SK-N-SH (cell line): ENCODE measurements at regions of chr15 and their contacts with region 1.

Region 1: DNA sequence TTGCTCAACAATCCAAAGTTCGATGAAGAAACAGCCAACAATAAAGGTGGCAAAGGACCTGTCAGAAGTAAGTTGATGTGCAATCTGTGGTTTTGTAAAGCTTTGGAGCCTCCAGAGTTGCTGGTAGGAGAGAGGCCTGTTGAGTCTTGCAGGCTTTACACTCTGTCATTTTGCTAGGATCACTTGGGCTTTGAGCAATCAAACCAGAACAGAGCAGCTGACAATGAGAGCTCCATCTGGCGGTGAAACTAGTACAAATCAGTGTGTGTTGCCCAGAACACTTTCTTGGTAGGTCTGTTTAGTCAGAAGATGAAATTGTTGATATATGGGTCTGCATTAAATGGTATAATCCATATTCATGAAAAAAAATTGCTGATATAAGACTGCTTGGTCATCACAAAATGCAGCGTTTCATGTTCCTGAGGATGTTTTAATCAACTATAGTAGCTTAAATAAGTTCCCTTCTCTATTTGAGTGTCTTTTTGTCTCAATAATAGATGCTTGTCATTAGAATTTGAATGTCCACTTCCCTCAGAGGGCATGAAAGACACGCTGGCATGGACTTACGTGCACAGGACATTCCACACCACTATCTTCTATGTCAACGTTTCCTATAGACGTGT is 25.7 kb downstream of the TMOD2 start:
- DNase-seq: peak; percentile 66
- H3K4me3 ChIP-seq: no peak overlapping the region
- H3K27ac ChIP-seq: no peak overlapping the region
- H3K4me1 ChIP-seq: peaks cover 0 to 3% of the 10 kb centered on the region in 2 experiments; a peak in 1 of 4 replicates
- H3K27me3 ChIP-seq: no peaks in the 10 kb centered on the region
- CTCF ChIP-seq: peak; percentile 83
- EP300 ChIP-seq: no peak
- RAD21 ChIP-seq: peak; percentile 77

Region 2: DNA sequence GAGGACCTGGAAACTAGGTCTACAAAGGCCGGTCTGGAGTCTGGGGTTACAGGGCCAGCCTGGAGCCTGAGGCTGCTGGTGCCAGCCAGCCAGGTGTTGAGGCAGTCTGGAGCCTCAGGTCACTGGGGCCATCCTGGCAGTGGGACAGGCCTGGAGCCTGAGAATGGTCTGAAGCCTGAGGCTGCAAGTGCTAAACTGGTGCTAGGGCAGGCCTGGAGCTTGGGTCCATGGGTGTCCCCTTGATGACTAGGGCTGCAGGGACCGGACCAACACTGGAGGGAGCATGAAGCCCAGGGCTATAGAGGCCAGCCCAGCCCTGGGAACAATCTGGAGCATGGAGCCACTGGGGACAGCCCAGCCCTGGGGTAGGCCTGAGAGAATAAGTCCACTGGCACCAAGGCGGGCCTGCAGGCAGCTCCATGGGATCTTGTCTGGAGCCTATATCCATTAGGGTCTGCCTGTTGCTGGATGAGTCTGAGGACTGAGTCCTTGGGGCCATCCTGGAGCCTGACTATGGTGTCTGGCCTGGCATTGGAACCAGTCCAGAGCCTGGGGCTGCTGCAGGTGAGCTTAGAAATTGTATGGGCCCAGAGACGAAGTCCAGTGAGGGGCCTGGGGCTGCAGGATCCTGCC is 333.7 kb before region 1 on chr15:
- CTCF ChIA-PET with region 1: no interaction called
- POLR2A ChIA-PET with region 1: no interaction called
- DNase-seq: no peak
- H3K4me3 ChIP-seq: no peak overlapping the region
- H3K27ac ChIP-seq: no peak overlapping the region
- H3K4me1 ChIP-seq: no peaks in the 10 kb centered on the region
- H3K27me3 ChIP-seq: no peaks in the 10 kb centered on the region
- CTCF ChIP-seq: no peak
- EP300 ChIP-seq: no peak
- RAD21 ChIP-seq: no peak

Region 3: DNA sequence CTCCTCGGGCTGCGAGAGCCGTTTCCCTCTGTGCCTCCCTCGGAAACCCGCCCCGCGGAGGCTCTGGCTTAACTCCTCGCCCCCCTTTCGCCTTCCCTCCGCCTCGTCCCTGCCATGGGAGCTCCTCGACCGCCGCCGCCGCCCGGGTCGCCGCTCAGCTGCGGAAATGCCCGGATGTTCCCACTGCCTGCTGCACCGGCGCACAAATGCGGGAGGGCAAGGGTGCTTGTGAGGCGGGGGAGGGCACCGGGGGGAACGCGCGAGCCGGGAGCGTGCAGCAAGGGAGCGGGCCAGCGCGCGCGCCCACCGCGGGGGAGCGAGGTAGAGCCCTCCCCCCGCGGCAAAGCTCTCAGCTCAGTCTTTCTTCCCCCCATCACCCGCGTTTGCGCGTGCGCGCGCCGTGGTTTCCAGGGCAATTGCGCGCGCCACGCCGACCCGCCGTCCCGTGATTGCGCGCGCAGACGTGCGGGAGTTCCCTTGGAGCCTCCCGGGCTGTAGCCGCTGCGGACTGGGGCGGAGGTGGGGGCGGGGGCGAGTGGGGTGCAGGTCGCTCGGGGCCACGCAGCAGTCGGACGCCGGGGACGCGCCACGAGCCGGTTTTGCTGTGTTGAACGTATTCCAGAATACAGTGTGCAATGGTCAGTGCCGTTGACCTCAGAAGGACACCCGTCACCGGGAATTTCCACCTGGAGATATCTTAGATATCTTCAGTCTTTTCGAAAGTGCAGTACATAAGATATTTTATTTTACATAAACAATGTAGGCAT is 154.3 kb before region 1 on chr15 and contains the start of gene DMXL2:
- CTCF ChIA-PET with region 1: interaction called, 23 read pairs
- POLR2A ChIA-PET with region 1: no interaction called
- DNase-seq: peak; percentile 95
- H3K4me3 ChIP-seq: peak within 1 kb of the TSS; percentile 85 to 96
- H3K27ac ChIP-seq: peak within 1 kb of the TSS; percentile 64 to 90
- H3K4me1 ChIP-seq: peaks cover 11 to 12% of the 10 kb centered on the region in 2 experiments; a peak in 3 of 4 replicates
- H3K27me3 ChIP-seq: no peaks in the 10 kb centered on the region
- CTCF ChIP-seq: no peak
- EP300 ChIP-seq: peak in 1 of 2 experiments; percentile 35; a peak in 1 of 4 replicates
- RAD21 ChIP-seq: no peak
- polyA plus RNA-seq, gene DMXL2: 6.4 and 8.9 TPM in 2 replicates

Region 4: DNA sequence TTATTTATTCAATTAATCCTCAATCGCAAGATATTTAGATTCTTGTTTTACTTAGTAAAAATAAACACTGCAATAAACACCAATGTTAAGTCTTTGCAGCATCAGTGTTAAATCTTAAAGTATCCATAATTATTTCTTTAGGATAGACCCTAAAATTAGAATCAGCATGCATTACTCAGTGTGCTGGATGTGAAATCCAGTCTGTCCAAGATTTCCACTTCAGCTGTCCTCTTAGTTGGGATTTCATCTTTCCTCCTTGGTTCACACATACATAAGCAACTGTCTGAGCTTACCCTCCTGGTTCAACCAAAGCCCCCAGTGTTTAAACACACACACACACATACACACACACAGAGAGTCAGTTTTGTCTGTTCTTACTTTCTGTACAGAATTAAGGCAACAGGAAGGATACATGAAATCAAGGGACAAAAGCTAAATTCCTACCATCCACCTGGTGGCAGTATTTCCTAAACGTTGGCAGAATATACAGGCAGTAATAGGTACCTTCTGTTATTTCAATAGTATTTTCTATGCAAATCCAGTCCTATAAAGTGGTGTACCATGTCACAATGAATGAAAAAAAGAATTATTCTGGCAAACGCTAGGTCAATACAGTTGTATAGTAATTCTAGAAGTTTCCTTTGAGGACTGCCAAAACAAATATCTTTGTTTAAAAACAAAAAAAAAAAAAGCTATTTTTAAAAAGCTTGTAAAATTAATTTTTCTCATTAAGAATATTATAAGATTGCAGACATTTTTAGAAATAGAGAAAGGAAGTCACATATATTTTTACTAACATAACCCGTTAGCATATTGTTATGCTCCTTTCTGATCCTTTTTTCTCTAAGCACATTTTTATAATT is 127.2 kb before region 1 on chr15:
- CTCF ChIA-PET with region 1: interaction called, 313 read pairs
- POLR2A ChIA-PET with region 1: interaction called, 11 read pairs
- DNase-seq: peak; percentile 71
- H3K4me3 ChIP-seq: peak overlapping the region in 1 of 2 experiments; percentile 18; a peak in 1 of 4 replicates
- H3K27ac ChIP-seq: no peak overlapping the region
- H3K4me1 ChIP-seq: peaks cover 0 to 2% of the 10 kb centered on the region in 2 experiments; a peak in 2 of 4 replicates
- H3K27me3 ChIP-seq: no peaks in the 10 kb centered on the region
- CTCF ChIP-seq: peak; percentile 88
- EP300 ChIP-seq: no peak
- RAD21 ChIP-seq: peak; percentile 99

Region 5: DNA sequence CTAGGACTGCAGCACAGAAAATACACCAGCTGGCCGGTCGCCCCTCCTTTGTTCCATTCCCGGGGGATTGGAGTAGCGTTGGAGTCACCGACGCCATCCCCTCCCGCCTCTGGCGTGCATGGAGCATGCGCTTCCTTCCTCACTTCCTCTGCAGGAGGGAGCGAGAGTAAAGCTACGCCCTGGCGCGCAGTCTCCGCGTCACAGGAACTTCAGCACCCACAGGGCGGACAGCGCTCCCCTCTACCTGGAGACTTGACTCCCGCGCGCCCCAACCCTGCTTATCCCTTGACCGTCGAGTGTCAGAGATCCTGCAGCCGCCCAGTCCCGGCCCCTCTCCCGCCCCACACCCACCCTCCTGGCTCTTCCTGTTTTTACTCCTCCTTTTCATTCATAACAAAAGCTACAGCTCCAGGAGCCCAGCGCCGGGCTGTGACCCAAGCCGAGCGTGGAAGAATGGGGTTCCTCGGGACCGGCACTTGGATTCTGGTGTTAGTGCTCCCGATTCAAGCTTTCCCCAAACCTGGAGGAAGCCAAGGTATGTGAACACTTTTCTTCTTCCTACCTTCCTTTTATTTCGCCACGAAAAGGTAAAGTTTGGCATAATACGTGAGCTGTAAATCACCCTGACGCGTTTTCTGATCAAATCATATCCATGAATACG is 95.6 kb before region 1 on chr15 and contains the start of gene SCG3:
- CTCF ChIA-PET with region 1: interaction called, 44 read pairs
- POLR2A ChIA-PET with region 1: interaction called, 5 read pairs
- DNase-seq: peak; percentile 80
- H3K4me3 ChIP-seq: peak within 1 kb of the TSS; percentile 31 to 48; a peak in 3 of 4 replicates
- H3K27ac ChIP-seq: peak within 1 kb of the TSS in 1 of 2 experiments; percentile 64; a peak in 2 of 4 replicates
- H3K4me1 ChIP-seq: peaks cover 0 to 5% of the 10 kb centered on the region in 2 experiments; a peak in 2 of 4 replicates
- H3K27me3 ChIP-seq: no peaks in the 10 kb centered on the region; the same call in 1 of the 2 replicates
- CTCF ChIP-seq: no peak
- EP300 ChIP-seq: no peak
- RAD21 ChIP-seq: peak; percentile 2; the same call in 1 of the 2 replicates
- polyA plus RNA-seq, gene SCG3: 0.16 and 0.41 TPM in 2 replicates

Region 6: GRCh38 chr15:51750792-51751685 is 26.0 kb before region 1 on chr15 and contains the start of gene TMOD2:
- CTCF ChIA-PET with region 1: interaction called, 51 read pairs
- POLR2A ChIA-PET with region 1: no interaction called
- DNase-seq: peak; percentile 89
- H3K4me3 ChIP-seq: peak within 1 kb of the TSS; percentile 78 to 81
- H3K27ac ChIP-seq: peak within 1 kb of the TSS in 1 of 2 experiments; percentile 60; a peak in 2 of 4 replicates
- H3K4me1 ChIP-seq: peaks cover 4 to 5% of the 10 kb centered on the region in 2 experiments; a peak in 2 of 4 replicates
- H3K27me3 ChIP-seq: no peaks in the 10 kb centered on the region; the same call in 1 of the 2 replicates
- CTCF ChIP-seq: no peak
- EP300 ChIP-seq: no peak
- RAD21 ChIP-seq: no peak
- polyA plus RNA-seq, gene TMOD2: 2.7 and 4.4 TPM in 2 replicates

Region 7: DNA sequence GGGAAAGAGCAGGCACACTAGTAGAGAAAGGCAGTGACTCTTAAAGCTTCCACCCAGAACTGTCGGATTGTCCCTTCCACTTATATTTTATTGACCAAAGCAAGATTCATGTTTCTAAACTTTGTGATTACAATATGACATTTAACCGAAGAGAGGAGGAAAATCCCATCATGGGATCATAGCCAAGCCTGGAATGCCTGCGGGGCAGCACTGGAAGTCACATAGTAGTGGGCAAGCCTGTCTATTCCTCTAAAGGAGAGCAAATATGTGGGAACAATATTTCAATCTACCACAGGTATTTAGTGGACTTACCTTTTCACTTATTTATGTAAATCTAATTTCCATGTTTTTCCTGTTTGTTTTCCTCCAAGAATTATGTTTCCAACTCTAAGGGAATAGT is 48.6 kb after region 1 on chr15:
- CTCF ChIA-PET with region 1: interaction called, 11 read pairs
- POLR2A ChIA-PET with region 1: no interaction called
- DNase-seq: no peak
- H3K4me3 ChIP-seq: no peak overlapping the region
- H3K27ac ChIP-seq: no peak overlapping the region
- H3K4me1 ChIP-seq: peaks cover 0 to under 1% of the 10 kb centered on the region in 2 experiments; a peak in 1 of 4 replicates
- H3K27me3 ChIP-seq: no peaks in the 10 kb centered on the region
- CTCF ChIP-seq: no peak
- EP300 ChIP-seq: no peak
- RAD21 ChIP-seq: no peak